ENCODE measurements at regions of chr17 and their contacts with region 1.

Region 1: DNA sequence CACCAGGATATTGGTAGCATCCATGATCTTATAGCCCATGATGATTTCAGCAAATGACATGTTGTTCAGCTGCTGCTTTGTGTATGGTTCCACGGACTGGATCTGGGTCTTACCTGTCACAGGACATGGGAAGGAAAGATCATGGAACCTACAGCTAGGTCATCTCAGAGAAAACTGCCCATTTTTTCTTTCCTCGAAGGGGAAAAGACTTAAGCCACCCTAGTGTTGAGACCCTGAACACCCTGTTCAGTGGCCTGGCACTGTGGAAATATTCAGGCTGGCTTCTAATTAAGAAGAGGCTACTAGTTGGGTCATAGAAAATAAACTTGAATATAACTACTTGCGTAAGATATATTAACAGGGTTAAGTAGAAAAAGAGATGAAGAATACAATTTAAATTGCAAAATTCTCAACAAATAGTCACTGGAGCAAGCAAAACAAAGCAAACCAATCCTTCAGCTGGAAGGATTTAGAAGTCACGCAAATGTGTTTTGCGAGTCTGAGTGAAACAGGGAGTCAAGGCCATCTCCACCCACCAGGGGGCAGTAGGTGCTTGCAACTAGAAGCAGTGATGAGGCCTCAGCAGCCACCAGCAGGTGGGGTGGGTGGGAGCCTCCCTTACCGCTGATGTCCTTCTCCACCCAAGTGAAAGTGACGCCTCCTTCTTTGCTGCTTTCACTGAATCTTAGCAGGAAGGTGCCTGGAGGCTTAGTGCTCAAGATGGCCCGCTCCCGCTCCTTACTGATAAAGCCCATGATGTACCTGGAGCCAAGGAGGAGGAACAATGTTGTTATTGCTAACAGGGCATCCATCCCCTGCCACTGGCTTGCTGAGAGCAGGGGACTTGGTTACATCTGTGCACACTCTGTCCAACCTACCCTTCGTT is 34.3 kb downstream of the STAT5A start:
- DNase-seq: peak; percentile 88 to 94
- ATAC-seq: peak; percentile 71 to 88 (median 82)
- H3K4me3 ChIP-seq: no peak overlapping the region
- H3K27ac ChIP-seq: peak overlapping the region in 4 of 10 donors; percentile 24 to 51 (median 35)
- H3K4me1 ChIP-seq: peaks cover 0 to 46% (median 21%) of the 10 kb centered on the region in 9 donors
- H3K27me3 ChIP-seq: no peaks in the 10 kb centered on the region
- CTCF ChIP-seq: peak; percentile 99 to 100 (median 99)

Region 2: GRCh38 chr17:42388381-42389134 is 65.9 kb after region 1 on chr17 and contains the start of gene STAT3:
- intact Hi-C with region 1: loop called in 2 of 10 experiments (anchors 5 kb)
- DNase-seq: peak; percentile 100
- ATAC-seq: peak; percentile 95 to 99 (median 98)
- H3K4me3 ChIP-seq: peak within 1 kb of the TSS; percentile 67 to 100 (median 90)
- H3K27ac ChIP-seq: peak within 1 kb of the TSS; percentile 95 to 100 (median 100)
- H3K4me1 ChIP-seq: peaks cover 0 to 50% (median 35%) of the 10 kb centered on the region in 9 donors
- H3K27me3 ChIP-seq: no peaks in the 10 kb centered on the region
- CTCF ChIP-seq: peak in 3 of 9 donors; percentile 2 to 32 (median 26)
- total RNA-seq, gene STAT3: 87.2 to 398 (median 115) TPM

Region 3: GRCh38 chr17:42399948-42400843 is 77.6 kb after region 1 on chr17:
- intact Hi-C with region 1: loop called in 5 of 10 experiments (anchors 2 to 5 kb)
- DNase-seq: no peak
- ATAC-seq: no peak
- H3K4me3 ChIP-seq: no peak overlapping the region
- H3K27ac ChIP-seq: peak overlapping the region in 6 of 10 donors; percentile 15 to 74 (median 35)
- H3K4me1 ChIP-seq: peaks cover 6 to 63% (median 43%) of the 10 kb centered on the region in 9 donors
- H3K27me3 ChIP-seq: no peaks in the 10 kb centered on the region
- CTCF ChIP-seq: no peak

Region 4: GRCh38 chr17:42405963-42406495 is 83.4 kb after region 1 on chr17:
- intact Hi-C with region 1: loop called (anchors 1 to 5 kb)
- DNase-seq: peak; percentile 83 to 90
- ATAC-seq: peak; percentile 56 to 80 (median 68)
- H3K4me3 ChIP-seq: peak overlapping the region in 6 of 10 donors; percentile 16 to 25 (median 21)
- H3K27ac ChIP-seq: peak overlapping the region; percentile 19 to 100 (median 84)
- H3K4me1 ChIP-seq: peaks cover 40 to 93% (median 87%) of the 10 kb centered on the region in 9 donors
- H3K27me3 ChIP-seq: no peaks in the 10 kb centered on the region
- CTCF ChIP-seq: peak; percentile 79 to 91 (median 85)

Region 5: GRCh38 chr17:42459256-42459800 is 136.7 kb after region 1 on chr17:
- intact Hi-C with region 1: loop called in 1 of 10 experiments (anchors 5 kb)
- DNase-seq: peak; percentile 36 to 41
- ATAC-seq: peak; percentile 29 to 65 (median 46)
- H3K4me3 ChIP-seq: peak overlapping the region; percentile 39 to 87 (median 78)
- H3K27ac ChIP-seq: peak overlapping the region; percentile 73 to 96 (median 92)
- H3K4me1 ChIP-seq: peaks cover 2 to 69% (median 34%) of the 10 kb centered on the region in 9 donors
- H3K27me3 ChIP-seq: no peaks in the 10 kb centered on the region
- CTCF ChIP-seq: peak in 5 of 9 donors; percentile 7 to 49 (median 43)

Region 6: DNA sequence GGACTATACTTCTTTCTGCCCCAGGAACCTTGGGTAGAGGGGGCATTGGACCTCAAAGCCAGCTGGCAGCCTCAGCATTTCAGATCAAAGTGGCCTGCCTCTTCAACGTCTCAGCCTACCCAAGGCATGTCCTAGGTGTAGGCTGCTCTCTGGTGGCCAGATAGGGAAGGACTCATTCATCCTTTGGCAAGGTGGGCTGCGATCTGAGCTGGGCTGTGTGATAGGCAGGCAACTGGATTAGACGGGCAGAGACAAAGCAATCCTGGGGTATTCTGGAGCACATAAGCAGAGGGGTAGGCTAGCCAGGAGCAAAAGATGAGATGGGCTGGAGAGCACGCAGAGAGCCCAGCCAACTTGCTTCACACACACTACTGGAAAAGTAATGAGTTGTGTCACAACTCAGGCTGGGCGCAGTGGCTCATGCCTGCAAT is 204.7 kb after region 1 on chr17:
- intact Hi-C with region 1: loop called in 2 of 10 experiments (anchors 2 to 5 kb)
- DNase-seq: peak in 1 of 2 donors; percentile 81
- ATAC-seq: peak; percentile 67 to 92 (median 81)
- H3K4me3 ChIP-seq: no peak overlapping the region
- H3K27ac ChIP-seq: peak overlapping the region in 8 of 10 donors; percentile 4 to 97 (median 70)
- H3K4me1 ChIP-seq: peaks cover 16 to 61% (median 40%) of the 10 kb centered on the region in 9 donors
- H3K27me3 ChIP-seq: no peaks in the 10 kb centered on the region
- CTCF ChIP-seq: peak; percentile 68 to 91 (median 86)

Measured in heart right ventricle (tissue), 16 donors.